ENCODE measurements at regions of chr12 and their contacts with region 1.

Region 1: GRCh38 chr12:62267480-62267879 is 7.3 kb downstream of the USP15 start:
- DNase-seq: no peak
- ATAC-seq: no peak
- H3K4me3 ChIP-seq: no peak overlapping the region
- H3K4me3 Mint-ChIP-seq: peak overlapping the region; percentile 30
- H3K27ac ChIP-seq: no peak overlapping the region
- H3K27ac Mint-ChIP-seq: peak overlapping the region; percentile 15
- H3K4me1 ChIP-seq: peaks cover 86% of the 10 kb centered on the region
- H3K4me1 Mint-ChIP-seq: peaks cover 94% of the 10 kb centered on the region
- H3K27me3 ChIP-seq: no peaks in the 10 kb centered on the region
- H3K27me3 Mint-ChIP-seq: no peaks in the 10 kb centered on the region
- CTCF ChIP-seq: no peak

Region 2: DNA sequence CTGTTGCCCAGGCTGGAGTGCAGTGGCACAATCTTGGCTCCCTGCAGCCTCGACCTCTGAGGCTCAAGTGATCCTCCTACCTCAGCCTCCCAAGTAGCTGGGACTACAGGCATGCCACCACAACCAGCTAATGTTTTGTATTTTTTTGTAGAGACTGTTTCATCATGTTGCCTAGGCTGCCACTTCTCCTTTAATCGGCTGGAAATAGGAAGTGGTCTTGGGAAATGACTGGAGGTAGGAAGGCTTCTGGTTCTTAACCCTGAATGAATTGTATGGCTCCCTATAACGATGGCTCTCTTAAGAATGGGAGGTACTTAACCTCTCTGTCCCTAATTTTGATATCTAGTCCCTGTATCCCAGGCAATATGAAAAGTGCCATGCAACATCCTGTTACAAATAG is 121.2 kb before region 1 on chr12:
- CTCF ChIA-PET with region 1: no interaction called
- POLR2A ChIA-PET with region 1: no interaction called
- intact Hi-C with region 1: no loop called
- DNase-seq: no peak
- ATAC-seq: no peak
- H3K4me3 ChIP-seq: no peak overlapping the region
- H3K4me3 Mint-ChIP-seq: no peak overlapping the region
- H3K27ac ChIP-seq: no peak overlapping the region
- H3K27ac Mint-ChIP-seq: no peak overlapping the region
- H3K4me1 ChIP-seq: no peaks in the 10 kb centered on the region
- H3K4me1 Mint-ChIP-seq: no peaks in the 10 kb centered on the region
- H3K27me3 ChIP-seq: no peaks in the 10 kb centered on the region
- H3K27me3 Mint-ChIP-seq: no peaks in the 10 kb centered on the region
- CTCF ChIP-seq: no peak

Region 3: DNA sequence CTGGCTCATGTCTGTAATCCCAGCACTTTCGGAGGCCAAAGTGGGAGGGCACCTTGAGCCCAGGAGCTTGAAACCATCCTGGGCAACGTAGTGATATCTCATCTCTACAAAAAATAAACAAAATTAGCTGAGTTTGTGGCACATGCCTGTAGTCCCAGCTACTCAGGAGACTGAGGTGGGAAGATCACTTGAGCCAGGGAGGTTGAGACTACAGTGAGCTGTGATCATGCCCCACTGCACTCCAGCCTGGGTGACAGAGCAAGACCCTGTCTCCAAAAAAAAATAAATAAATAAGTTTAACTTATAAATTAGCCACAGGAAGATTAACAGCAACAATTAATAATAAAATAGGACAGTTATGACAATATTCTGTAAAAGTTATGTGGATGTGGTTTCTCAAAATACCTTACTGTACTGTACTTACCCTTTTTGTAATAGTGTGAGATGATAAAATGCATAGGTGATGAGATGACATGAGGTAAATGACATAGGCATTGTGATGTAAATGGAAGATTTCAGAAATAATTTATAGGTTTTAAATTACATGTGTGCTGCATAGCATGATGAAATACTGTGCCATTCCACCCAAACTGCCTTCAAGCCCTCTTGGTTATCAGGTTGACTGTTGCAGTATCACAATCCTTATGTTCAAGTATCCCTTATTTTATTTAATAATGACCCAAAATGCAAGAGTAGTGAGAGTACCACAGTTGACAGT is 14.7 kb after region 1 on chr12:
- CTCF ChIA-PET with region 1: no interaction called
- POLR2A ChIA-PET with region 1: interaction called, 5 read pairs
- intact Hi-C with region 1: loop called in 1 of 2 experiments (anchors 2 kb)
- DNase-seq: no peak
- ATAC-seq: no peak
- H3K4me3 ChIP-seq: no peak overlapping the region
- H3K4me3 Mint-ChIP-seq: no peak overlapping the region
- H3K27ac ChIP-seq: no peak overlapping the region
- H3K27ac Mint-ChIP-seq: no peak overlapping the region
- H3K4me1 ChIP-seq: peaks cover 30% of the 10 kb centered on the region
- H3K4me1 Mint-ChIP-seq: peaks cover 81% of the 10 kb centered on the region
- H3K27me3 ChIP-seq: no peaks in the 10 kb centered on the region
- H3K27me3 Mint-ChIP-seq: no peaks in the 10 kb centered on the region
- CTCF ChIP-seq: no peak